SK-N-SH (cell line): ENCODE measurements at regions of chr22 and their contacts with region 1.

Region 1: DNA sequence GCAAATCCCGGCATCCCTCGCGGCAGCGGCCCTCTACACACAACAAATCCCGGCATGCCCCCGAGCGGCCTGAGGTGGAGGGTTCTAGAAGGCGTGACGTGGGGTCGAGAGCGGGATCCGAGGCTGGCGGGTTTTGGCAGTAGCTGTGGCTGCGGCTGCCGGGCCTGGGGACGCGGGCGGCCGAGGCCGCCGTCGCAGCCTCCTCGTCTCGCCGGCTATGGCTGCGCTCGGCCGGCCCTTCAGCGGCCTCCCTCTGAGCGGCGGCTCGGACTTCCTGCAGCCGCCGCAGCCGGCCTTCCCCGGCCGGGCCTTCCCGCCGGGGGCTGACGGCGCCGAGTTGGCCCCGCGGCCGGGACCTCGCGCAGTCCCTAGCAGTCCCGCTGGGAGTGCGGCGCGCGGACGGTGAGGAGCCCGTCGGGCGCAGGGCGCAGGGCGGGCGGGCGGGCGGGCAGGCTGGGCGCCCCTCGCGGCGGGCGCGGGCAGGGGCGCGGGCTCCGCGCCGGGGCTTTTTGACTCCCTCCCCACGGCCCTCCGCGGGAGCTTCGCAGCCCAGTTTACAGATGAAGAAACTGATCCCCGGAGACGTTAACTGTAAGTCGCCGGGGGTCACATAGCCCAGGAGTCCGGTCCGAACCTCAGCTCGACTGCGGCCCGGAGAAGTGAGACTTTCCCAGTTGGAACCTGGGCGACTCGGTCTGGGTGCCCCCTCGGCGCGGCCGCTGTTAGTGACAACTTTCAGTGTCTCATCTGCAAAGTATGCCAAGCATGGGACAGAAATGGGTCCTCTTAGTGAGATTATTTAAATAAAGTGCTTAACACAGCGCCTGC is at the start of gene CCDC117:
- DNase-seq: peak; percentile 95
- H3K4me3 ChIP-seq: peak within 1 kb of the TSS; percentile 60 to 88
- H3K27ac ChIP-seq: peak within 1 kb of the TSS; percentile 71 to 88
- H3K4me1 ChIP-seq: no peaks in the 10 kb centered on the region
- H3K27me3 ChIP-seq: no peaks in the 10 kb centered on the region
- CTCF ChIP-seq: no peak; the same call in 1 of the 2 replicates
- EP300 ChIP-seq: no peak; a peak in 1 of 4 replicates
- RAD21 ChIP-seq: no peak
- polyA plus RNA-seq, gene CCDC117: 4.2 and 4.5 TPM in 2 replicates

Region 2: GRCh38 chr22:28521451-28521850 is 251.4 kb before region 1 on chr22:
- CTCF ChIA-PET with region 1: no interaction called
- POLR2A ChIA-PET with region 1: no interaction called
- DNase-seq: no peak
- H3K4me3 ChIP-seq: no peak overlapping the region
- H3K27ac ChIP-seq: no peak overlapping the region
- H3K4me1 ChIP-seq: peaks cover 0 to 2% of the 10 kb centered on the region in 2 experiments; a peak in 1 of 4 replicates
- H3K27me3 ChIP-seq: no peaks in the 10 kb centered on the region
- CTCF ChIP-seq: no peak
- EP300 ChIP-seq: no peak
- RAD21 ChIP-seq: no peak

Region 3: GRCh38 chr22:28783786-28784671 is 11.2 kb after region 1 on chr22:
- CTCF ChIA-PET with region 1: interaction called, 10 read pairs
- POLR2A ChIA-PET with region 1: interaction called, 4 read pairs
- DNase-seq: no peak
- H3K4me3 ChIP-seq: no peak overlapping the region
- H3K27ac ChIP-seq: no peak overlapping the region
- H3K4me1 ChIP-seq: no peaks in the 10 kb centered on the region
- H3K27me3 ChIP-seq: no peaks in the 10 kb centered on the region
- CTCF ChIP-seq: no peak
- EP300 ChIP-seq: no peak
- RAD21 ChIP-seq: no peak

Region 4: DNA sequence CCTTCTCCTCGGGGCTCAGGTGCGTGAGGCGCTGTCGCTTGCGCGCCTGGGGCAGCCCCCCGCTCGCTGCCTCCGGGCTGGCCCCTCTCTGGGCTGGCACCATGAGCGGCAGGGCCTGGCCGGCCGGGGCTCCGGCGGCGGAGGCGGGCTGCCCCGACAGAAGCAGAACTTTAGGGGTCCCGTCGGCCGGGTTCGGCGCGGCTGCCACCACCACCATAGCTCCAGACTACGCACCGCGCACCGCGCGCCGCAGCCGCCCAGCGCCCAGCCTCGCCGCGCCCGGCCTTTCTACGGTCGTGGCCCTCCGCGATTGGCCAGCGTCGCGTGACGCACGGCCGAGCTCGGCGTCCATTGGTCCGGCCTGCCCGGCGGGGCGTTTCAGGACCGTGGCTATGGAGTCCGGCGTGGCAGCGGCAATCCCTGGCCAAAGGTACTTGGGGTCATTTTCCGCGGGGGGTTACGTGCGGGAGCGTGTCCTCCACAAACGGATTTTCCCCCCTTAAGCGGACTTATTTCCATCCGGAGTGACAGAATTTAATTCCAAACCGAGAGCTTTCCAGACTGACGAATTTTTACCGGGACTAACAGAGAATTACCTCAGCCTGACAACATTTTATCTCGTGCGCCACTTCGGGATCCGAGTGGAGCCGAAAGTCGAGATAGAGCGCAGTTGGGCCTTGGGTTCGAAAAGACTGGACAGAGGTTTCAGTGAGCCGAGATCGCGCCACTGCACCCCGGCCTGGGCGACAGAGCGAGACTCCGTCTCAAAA is 27.6 kb after region 1 on chr22 and contains the start of gene XBP1:
- CTCF ChIA-PET with region 1: interaction called, 17 read pairs
- POLR2A ChIA-PET with region 1: interaction called, 9 read pairs
- DNase-seq: peak; percentile 98
- H3K4me3 ChIP-seq: peak within 1 kb of the TSS; percentile 79 to 95
- H3K27ac ChIP-seq: peak within 1 kb of the TSS; percentile 87 to 99
- H3K4me1 ChIP-seq: peaks cover 2 to 11% of the 10 kb centered on the region in 2 experiments; a peak in 1 of 4 replicates
- H3K27me3 ChIP-seq: no peaks in the 10 kb centered on the region
- CTCF ChIP-seq: no peak
- EP300 ChIP-seq: no peak
- RAD21 ChIP-seq: no peak
- polyA plus RNA-seq, gene XBP1: 55.6 and 67.6 TPM in 2 replicates